ENCODE measurements at regions of chr13 and their contacts with region 1.

Region 1: GRCh38 chr13:48580185-48580803 is 47.4 kb upstream of the RCBTB2 start:
- H3K4me3 Mint-ChIP-seq: no peak overlapping the region
- H3K27ac Mint-ChIP-seq: peak overlapping the region; percentile 94
- H3K4me1 Mint-ChIP-seq: peaks cover 63% of the 10 kb centered on the region
- H3K27me3 Mint-ChIP-seq: no peaks in the 10 kb centered on the region

Region 2: GRCh38 chr13:48244159-48244558 is 336.1 kb before region 1 on chr13:
- intact Hi-C with region 1: loop called (anchors 10 kb)
- H3K4me3 Mint-ChIP-seq: no peak overlapping the region
- H3K27ac Mint-ChIP-seq: no peak overlapping the region
- H3K4me1 Mint-ChIP-seq: peaks cover 41% of the 10 kb centered on the region
- H3K27me3 Mint-ChIP-seq: no peaks in the 10 kb centered on the region

Region 3: GRCh38 chr13:48400850-48401291 is 179.4 kb before region 1 on chr13:
- intact Hi-C with region 1: loop called (anchors 5 kb)
- H3K4me3 Mint-ChIP-seq: no peak overlapping the region
- H3K27ac Mint-ChIP-seq: peak overlapping the region; percentile 57
- H3K4me1 Mint-ChIP-seq: peaks cover 46% of the 10 kb centered on the region
- H3K27me3 Mint-ChIP-seq: no peaks in the 10 kb centered on the region

Region 4: GRCh38 chr13:48505597-48506091 is 74.7 kb before region 1 on chr13:
- intact Hi-C with region 1: loop called (anchors 1 kb)
- H3K4me3 Mint-ChIP-seq: peak overlapping the region; percentile 56
- H3K27ac Mint-ChIP-seq: peak overlapping the region; percentile 96
- H3K4me1 Mint-ChIP-seq: peaks cover 87% of the 10 kb centered on the region
- H3K27me3 Mint-ChIP-seq: no peaks in the 10 kb centered on the region

Region 5: GRCh38 chr13:48562296-48563066 is 17.8 kb before region 1 on chr13:
- intact Hi-C with region 1: loop called (anchors 2 kb)
- H3K4me3 Mint-ChIP-seq: no peak overlapping the region
- H3K27ac Mint-ChIP-seq: peak overlapping the region; percentile 92
- H3K4me1 Mint-ChIP-seq: peaks cover 81% of the 10 kb centered on the region
- H3K27me3 Mint-ChIP-seq: no peaks in the 10 kb centered on the region

Measured in dendritic cell treated with granulocyte-macrophage colony-stimulating factor and Interleukin-4, amounts not matched to agents 40 ng/mL and 50 ng/mL, for 4 days (primary cell).